ENCODE measurements at regions of chr4 and their contacts with region 1.

Region 1: DNA sequence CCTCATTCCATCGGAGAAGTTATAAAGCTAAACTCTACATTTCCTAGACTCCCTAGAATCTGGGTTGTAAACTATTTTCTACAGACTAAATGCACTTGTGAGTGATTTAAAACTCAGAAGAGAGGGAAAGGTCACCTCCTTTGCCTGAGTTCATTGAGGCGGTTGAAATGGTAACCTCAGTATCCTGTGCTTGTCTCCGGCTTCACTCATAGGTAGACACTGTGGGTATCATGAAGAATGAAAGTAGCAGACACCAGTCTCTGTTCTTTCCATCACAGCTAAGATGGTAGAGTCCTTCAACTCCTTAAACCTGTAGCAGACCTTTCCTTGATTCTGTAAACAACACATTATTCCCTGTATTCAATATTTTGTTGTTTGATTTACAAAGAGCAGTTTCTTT is 291.3 kb upstream of the ANKRD50 start:
- DNase-seq: no peak
- ATAC-seq: no peak
- H3K4me3 ChIP-seq: no peak overlapping the region
- H3K27ac ChIP-seq: no peak overlapping the region
- H3K4me1 ChIP-seq: no peaks in the 10 kb centered on the region
- H3K27me3 ChIP-seq: no peaks in the 10 kb centered on the region
- CTCF ChIP-seq: no peak
- POLR2A ChIP-seq: no peak
- RAD21 ChIP-seq: no peak

Region 2: DNA sequence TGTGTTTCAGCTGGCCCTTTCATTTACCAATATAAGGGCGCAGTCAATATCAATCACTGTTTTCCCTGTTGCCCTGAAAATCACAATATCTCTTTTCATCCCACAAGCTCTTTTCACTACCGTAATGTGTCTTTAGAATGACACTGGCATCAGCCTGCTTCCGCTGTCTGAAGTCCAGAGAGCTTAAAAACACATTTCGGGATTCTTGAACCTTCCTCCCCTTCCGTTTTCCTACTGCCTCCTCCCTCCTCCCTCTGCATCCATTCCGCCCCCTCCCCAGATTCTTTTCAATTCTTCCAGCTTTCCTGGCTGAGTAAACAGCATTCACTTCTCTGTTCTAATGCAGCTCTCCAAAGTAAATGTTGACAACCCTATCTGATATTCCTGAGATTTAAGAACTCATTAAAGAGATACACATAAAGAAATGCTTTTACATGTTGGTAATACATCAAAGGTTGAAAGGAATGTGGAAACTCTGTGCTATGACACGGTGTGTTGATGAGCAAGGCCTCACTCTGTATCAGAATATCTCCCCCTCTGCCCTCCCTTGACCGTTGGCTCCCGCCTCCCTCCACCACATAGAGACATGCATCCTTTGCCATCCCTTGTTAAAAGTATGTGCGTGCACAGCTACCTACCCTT is 1690.8 kb before region 1 on chr4:
- CTCF ChIA-PET with region 1: no interaction called
- POLR2A ChIA-PET with region 1: interaction called, 13 read pairs
- dilution Hi-C with region 1: no loop called
- in situ Hi-C with region 1: no loop called
- intact Hi-C with region 1: no loop called
- DNase-seq: no peak
- ATAC-seq: no peak
- H3K4me3 ChIP-seq: no peak overlapping the region
- H3K27ac ChIP-seq: no peak overlapping the region
- H3K4me1 ChIP-seq: no peaks in the 10 kb centered on the region
- H3K27me3 ChIP-seq: no peaks in the 10 kb centered on the region
- CTCF ChIP-seq: no peak
- POLR2A ChIP-seq: no peak
- RAD21 ChIP-seq: no peak

Region 3: DNA sequence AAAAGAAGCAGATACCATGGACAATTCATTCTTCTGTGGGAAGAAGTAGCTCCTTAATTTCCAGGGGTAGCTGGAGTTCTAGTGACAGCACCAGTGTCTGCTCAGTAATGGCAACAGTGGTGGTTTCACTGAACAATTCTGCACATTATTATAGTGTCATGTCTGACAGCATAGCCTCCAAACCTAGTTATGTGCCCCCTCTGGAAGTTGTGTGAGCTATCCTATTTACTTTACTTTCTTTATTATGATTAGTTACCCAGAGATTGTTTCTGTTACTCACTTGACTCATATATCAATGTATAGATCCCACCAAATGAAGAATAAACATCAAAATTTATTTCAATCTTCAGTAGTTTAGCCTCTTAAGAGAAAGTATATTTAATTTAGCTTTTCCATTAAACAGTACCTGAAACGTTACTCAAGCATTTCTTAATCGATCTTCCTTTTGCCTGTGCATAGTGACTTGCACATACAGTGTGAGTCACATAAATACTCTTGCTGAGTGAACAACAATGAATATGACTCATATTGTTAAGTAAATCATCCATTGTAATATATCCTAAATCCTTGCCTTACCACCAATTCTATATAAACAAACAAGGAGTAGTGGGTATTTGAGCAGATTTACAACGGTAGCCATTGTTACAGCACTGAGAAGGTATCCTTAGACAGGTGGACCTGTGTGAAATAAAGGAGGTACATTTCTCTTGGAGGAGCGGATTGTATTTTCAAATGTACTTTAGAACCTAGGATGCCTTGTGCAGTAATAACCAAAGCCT is 826.0 kb before region 1 on chr4:
- CTCF ChIA-PET with region 1: no interaction called
- POLR2A ChIA-PET with region 1: no interaction called
- dilution Hi-C with region 1: no loop called
- in situ Hi-C with region 1: no loop called
- intact Hi-C with region 1: no loop called
- DNase-seq: peak; percentile 91
- ATAC-seq: peak; percentile 71
- H3K4me3 ChIP-seq: no peak overlapping the region
- H3K27ac ChIP-seq: no peak overlapping the region
- H3K4me1 ChIP-seq: peaks cover 12% of the 10 kb centered on the region
- H3K27me3 ChIP-seq: no peaks in the 10 kb centered on the region
- CTCF ChIP-seq: no peak
- POLR2A ChIP-seq: no peak
- RAD21 ChIP-seq: no peak

Region 4: GRCh38 chr4:125551466-125551865 is 547.6 kb after region 1 on chr4:
- CTCF ChIA-PET with region 1: no interaction called
- POLR2A ChIA-PET with region 1: no interaction called
- dilution Hi-C with region 1: no loop called
- in situ Hi-C with region 1: no loop called
- intact Hi-C with region 1: no loop called
- DNase-seq: no peak
- ATAC-seq: no peak
- H3K4me3 ChIP-seq: no peak overlapping the region
- H3K27ac ChIP-seq: no peak overlapping the region
- H3K4me1 ChIP-seq: peaks cover 2% of the 10 kb centered on the region; the same call in 1 of the 2 replicates
- H3K27me3 ChIP-seq: no peaks in the 10 kb centered on the region
- CTCF ChIP-seq: no peak
- POLR2A ChIP-seq: no peak
- RAD21 ChIP-seq: no peak